Prostate gland (tissue), 2 donors: ENCODE measurements at regions of chr1 and their contacts with region 1.

Region 1: GRCh38 chr1:6646499-6647148 is 22.0 kb downstream of the THAP3 start:
- DNase-seq: peak; percentile 29
- H3K4me3 ChIP-seq: no peak overlapping the region
- H3K27ac ChIP-seq: no peak overlapping the region
- H3K4me1 ChIP-seq: no peaks in the 10 kb centered on the region
- H3K27me3 ChIP-seq: no peaks in the 10 kb centered on the region
- CTCF ChIP-seq: peak in 3 of 4 experiments; percentile 56 to 81 (median 68)
- POLR2A ChIP-seq: no peak

Region 2: DNA sequence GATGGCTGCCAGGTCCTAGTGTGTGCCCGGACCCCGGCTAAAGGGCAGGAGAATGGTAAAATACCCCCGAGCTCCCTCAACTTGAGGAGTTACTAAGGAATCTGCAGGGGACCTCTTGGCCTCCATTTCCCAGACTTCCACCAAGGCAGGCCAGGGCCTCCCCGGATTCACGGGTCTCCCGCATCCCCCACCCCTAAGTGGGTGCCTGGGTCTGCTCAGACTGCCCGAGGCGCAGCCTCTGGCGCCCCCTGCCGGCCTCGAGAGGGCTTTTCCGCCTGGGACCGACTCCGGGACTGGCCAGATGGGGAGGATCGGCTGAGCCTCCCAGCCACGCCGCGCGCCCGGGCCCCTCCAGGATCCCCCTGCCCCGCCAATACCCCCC is 156.8 kb before region 1 on chr1:
- intact Hi-C with region 1: loop called (anchors 2 kb)
- DNase-seq: peak; percentile 66
- H3K4me3 ChIP-seq: peak overlapping the region; percentile 66 to 70
- H3K27ac ChIP-seq: peak overlapping the region; percentile 81 to 82
- H3K4me1 ChIP-seq: peaks cover 6% of the 10 kb centered on the region
- H3K27me3 ChIP-seq: no peaks in the 10 kb centered on the region
- CTCF ChIP-seq: peak; percentile 64 to 89 (median 76)
- POLR2A ChIP-seq: no peak

Region 3: DNA sequence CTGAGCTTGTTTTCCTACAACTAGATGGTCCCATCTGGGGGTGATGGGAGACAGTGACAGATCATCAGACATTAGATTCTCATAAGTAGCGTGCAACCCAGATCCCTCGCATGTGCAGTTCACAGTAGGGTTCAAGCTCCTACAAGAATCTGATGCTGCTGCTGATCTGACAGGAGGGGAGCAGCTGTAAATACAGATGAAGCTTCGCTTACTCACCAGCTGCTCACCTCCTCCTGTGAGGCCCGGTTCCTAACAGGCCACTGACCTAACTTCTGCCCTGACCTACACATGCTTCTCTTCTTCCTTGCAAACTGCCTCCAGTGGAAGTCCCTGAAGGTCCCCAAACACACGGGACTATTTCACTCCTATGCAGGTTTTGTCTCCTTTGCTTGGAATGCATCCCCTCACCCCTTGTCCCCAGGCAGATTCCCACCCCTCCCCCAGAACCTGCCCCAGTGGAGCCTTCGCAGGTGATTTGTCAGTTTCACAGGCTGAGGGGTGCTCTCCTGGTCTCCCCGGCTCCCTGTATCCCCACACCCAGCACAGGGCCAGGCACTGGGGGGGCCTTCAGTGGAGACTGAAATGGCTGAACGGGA is 72.5 kb before region 1 on chr1:
- intact Hi-C with region 1: loop called (anchors 5 kb)
- DNase-seq: no peak
- H3K4me3 ChIP-seq: no peak overlapping the region
- H3K27ac ChIP-seq: no peak overlapping the region
- H3K4me1 ChIP-seq: peaks cover 2% of the 10 kb centered on the region
- H3K27me3 ChIP-seq: no peaks in the 10 kb centered on the region
- CTCF ChIP-seq: no peak
- POLR2A ChIP-seq: no peak